ENCODE measurements at regions of chr18 and their contacts with region 1.

Region 1: GRCh38 chr18:3129053-3129864 is 90.5 kb downstream of the MYOM1 start:
- DNase-seq: peak; percentile 60 to 80
- ATAC-seq: peak; percentile 98 to 100
- H3K4me3 ChIP-seq: no peak overlapping the region
- H3K27ac ChIP-seq: no peak overlapping the region
- H3K4me1 ChIP-seq: no peaks in the 10 kb centered on the region; the same call in 2 of the 3 replicates
- CTCF ChIP-seq: peak; percentile 62
- EP300 ChIP-seq: no peak
- POLR2A ChIP-seq: no peak
- RAD21 ChIP-seq: peak; percentile 59 to 65

Region 2: GRCh38 chr18:2932247-2933181 is 196.7 kb before region 1 on chr18:
- CTCF ChIA-PET with region 1: interaction called, 10 read pairs
- POLR2A ChIA-PET with region 1: no interaction called
- DNase-seq: peak; percentile 21 to 50
- ATAC-seq: peak; percentile 54 to 55; a peak in 4 of 6 replicates
- H3K4me3 ChIP-seq: no peak overlapping the region
- H3K27ac ChIP-seq: peak overlapping the region; percentile 27 to 71; a peak in 4 of 6 replicates
- H3K4me1 ChIP-seq: peaks cover 29% of the 10 kb centered on the region
- CTCF ChIP-seq: peak; percentile 77
- EP300 ChIP-seq: no peak
- POLR2A ChIP-seq: no peak
- RAD21 ChIP-seq: peak; percentile 80 to 86

Region 3: GRCh38 chr18:3100498-3101132 is 28.6 kb before region 1 on chr18:
- CTCF ChIA-PET with region 1: interaction called, 11 read pairs
- POLR2A ChIA-PET with region 1: no interaction called
- DNase-seq: no peak
- ATAC-seq: no peak
- H3K4me3 ChIP-seq: no peak overlapping the region
- H3K27ac ChIP-seq: no peak overlapping the region
- H3K4me1 ChIP-seq: peaks cover 15% of the 10 kb centered on the region
- CTCF ChIP-seq: no peak
- EP300 ChIP-seq: no peak
- POLR2A ChIP-seq: no peak
- RAD21 ChIP-seq: no peak

Region 4: DNA sequence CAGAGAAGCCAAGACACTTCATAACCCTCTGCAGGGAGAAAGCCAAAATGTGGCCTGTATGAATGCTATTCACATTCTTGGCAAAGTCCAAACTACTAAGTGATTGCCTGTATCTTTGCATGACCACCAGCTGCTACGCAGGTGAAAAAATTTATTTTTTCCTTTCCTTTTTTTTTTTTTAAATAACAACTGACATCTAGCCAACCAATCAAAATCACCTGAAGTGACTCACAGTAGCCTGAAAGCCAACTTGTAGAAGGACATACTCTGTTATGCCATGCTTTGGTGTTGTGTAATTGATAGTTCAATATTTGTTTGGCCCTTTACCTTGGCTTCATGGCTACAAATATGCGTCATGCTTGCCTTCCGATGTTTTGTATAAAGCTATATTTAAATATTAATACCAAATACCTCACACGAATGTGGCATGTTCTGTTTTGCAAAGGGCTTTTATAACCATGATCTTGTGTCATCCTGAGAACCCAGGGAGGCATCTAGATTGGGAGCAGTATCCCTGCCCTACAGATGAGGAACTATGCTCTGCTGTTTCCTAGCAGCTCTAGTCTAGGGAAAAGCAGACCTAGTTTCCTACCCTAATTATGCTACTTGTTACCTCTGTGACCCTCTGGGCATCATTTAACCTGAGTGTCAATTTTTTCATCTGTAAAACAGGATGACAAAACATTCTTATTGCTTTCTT is 11.6 kb before region 1 on chr18:
- CTCF ChIA-PET with region 1: interaction called, 16 read pairs
- POLR2A ChIA-PET with region 1: no interaction called
- DNase-seq: peak in 1 of 2 experiments; percentile 82
- ATAC-seq: peak; percentile 88 to 91
- H3K4me3 ChIP-seq: no peak overlapping the region
- H3K27ac ChIP-seq: peak overlapping the region; percentile 70 to 76
- H3K4me1 ChIP-seq: peaks cover 34% of the 10 kb centered on the region
- CTCF ChIP-seq: no peak
- EP300 ChIP-seq: peak; percentile 55 to 57; a peak in 3 of 5 replicates
- POLR2A ChIP-seq: no peak
- RAD21 ChIP-seq: no peak

Region 5: DNA sequence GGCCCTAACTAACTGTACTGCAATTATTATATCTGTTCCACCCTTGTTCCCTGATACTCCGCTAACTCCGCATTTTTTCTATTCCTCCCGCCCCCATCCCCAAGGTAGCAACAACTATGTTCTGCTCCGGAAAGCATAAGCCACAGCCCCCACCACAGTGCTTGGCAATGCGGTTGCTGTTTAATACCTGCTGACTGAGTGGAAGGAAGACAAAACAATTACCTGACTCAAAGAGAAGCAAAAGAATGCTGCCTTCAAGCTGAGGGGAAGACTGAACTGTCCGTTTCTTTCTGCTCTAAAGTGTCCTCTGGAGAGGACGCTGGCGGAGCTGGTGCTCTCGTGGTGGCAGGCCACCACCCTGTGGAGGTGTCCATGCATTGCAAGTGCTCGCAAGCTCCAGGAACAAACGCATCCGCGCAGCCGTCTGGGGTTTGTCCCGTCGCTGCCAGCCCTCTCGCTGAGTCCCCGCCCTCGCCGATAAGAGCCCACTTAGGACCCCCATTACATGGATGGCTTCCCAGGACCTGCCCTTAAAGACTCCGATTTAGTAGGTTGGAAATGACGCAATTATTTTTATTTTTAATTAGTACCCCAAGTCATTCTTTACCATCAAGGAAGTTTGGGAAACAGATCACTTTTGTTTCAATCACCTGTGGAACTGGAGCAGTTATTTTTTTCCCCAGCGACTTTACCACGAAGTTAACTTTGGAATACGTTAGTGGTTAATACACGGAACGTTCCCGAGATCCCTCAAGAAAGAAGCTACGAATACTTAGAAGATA is 116.8 kb after region 1 on chr18:
- CTCF ChIA-PET with region 1: interaction called, 11 read pairs
- POLR2A ChIA-PET with region 1: no interaction called
- DNase-seq: peak; percentile 43 to 89
- ATAC-seq: peak; percentile 79 to 83
- H3K4me3 ChIP-seq: peak overlapping the region; percentile 41
- H3K27ac ChIP-seq: peak overlapping the region; percentile 93 to 98
- H3K4me1 ChIP-seq: peaks cover 24% of the 10 kb centered on the region
- CTCF ChIP-seq: peak; percentile 81
- EP300 ChIP-seq: no peak
- POLR2A ChIP-seq: no peak
- RAD21 ChIP-seq: peak; percentile 96 to 97